ENCODE measurements at regions of chr6 and their contacts with region 1.

Region 1: GRCh38 chr6:157756708-157757429 is 66.2 kb upstream of the SNX9 start:
- DNase-seq: peak; percentile 84
- H3K4me3 Mint-ChIP-seq: no peak overlapping the region
- H3K27ac Mint-ChIP-seq: no peak overlapping the region
- H3K4me1 Mint-ChIP-seq: peaks cover 70% of the 10 kb centered on the region
- H3K27me3 Mint-ChIP-seq: peaks cover 46% of the 10 kb centered on the region

Region 2: DNA sequence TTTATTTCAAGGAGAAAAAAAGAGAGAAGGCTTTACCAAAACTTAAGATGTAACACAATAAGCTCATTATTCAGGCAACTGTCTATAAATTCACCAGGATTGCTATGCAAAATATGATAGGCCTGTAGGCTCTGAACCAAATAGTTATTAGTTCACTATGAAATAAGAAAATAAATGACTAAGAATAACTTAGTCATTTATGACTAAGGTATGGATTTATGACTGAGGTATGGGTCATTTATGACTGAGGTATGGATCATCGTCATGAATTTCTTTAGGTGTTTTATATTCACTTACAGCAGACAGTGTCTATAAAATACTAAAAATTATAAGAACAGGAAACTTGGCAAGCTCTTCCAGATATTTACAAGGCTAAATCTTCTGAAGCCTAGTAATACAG is 14.1 kb after region 1 on chr6:
- CTCF ChIA-PET with region 1: interaction called, 10 read pairs
- POLR2A ChIA-PET with region 1: interaction called, 3 read pairs
- DNase-seq: no peak
- H3K4me3 Mint-ChIP-seq: no peak overlapping the region
- H3K27ac Mint-ChIP-seq: no peak overlapping the region
- H3K4me1 Mint-ChIP-seq: peaks cover 30% of the 10 kb centered on the region
- H3K27me3 Mint-ChIP-seq: peaks cover 27% of the 10 kb centered on the region

Region 3: GRCh38 chr6:157861814-157862213 is 104.9 kb after region 1 on chr6:
- CTCF ChIA-PET with region 1: interaction called, 12 read pairs
- POLR2A ChIA-PET with region 1: no interaction called
- DNase-seq: no peak
- H3K4me3 Mint-ChIP-seq: no peak overlapping the region
- H3K27ac Mint-ChIP-seq: no peak overlapping the region
- H3K4me1 Mint-ChIP-seq: peaks cover 23% of the 10 kb centered on the region
- H3K27me3 Mint-ChIP-seq: peaks cover 17% of the 10 kb centered on the region

Region 4: GRCh38 chr6:157885211-157885788 is 128.4 kb after region 1 on chr6:
- CTCF ChIA-PET with region 1: interaction called, 12 read pairs
- POLR2A ChIA-PET with region 1: interaction called, 7 read pairs
- DNase-seq: peak; percentile 68
- H3K4me3 Mint-ChIP-seq: peak overlapping the region; percentile 2
- H3K27ac Mint-ChIP-seq: peak overlapping the region; percentile 77
- H3K4me1 Mint-ChIP-seq: peaks cover 56% of the 10 kb centered on the region
- H3K27me3 Mint-ChIP-seq: no peaks in the 10 kb centered on the region

Region 5: GRCh38 chr6:158131926-158132325 is 375.1 kb after region 1 on chr6:
- CTCF ChIA-PET with region 1: interaction called, 11 read pairs
- POLR2A ChIA-PET with region 1: no interaction called
- DNase-seq: peak; percentile 23
- H3K4me3 Mint-ChIP-seq: no peak overlapping the region
- H3K27ac Mint-ChIP-seq: no peak overlapping the region
- H3K4me1 Mint-ChIP-seq: no peaks in the 10 kb centered on the region
- H3K27me3 Mint-ChIP-seq: no peaks in the 10 kb centered on the region

Measured in activated CD4-positive, alpha-beta memory T cell treated with anti-CD3 and anti-CD28 coated beads, Interleukin-2, amount 10 ng/mL, durations not matched to agents 7 days and 5 days (primary cell).